ENCODE measurements at regions of chr19 and their contacts with region 1.

Region 1: DNA sequence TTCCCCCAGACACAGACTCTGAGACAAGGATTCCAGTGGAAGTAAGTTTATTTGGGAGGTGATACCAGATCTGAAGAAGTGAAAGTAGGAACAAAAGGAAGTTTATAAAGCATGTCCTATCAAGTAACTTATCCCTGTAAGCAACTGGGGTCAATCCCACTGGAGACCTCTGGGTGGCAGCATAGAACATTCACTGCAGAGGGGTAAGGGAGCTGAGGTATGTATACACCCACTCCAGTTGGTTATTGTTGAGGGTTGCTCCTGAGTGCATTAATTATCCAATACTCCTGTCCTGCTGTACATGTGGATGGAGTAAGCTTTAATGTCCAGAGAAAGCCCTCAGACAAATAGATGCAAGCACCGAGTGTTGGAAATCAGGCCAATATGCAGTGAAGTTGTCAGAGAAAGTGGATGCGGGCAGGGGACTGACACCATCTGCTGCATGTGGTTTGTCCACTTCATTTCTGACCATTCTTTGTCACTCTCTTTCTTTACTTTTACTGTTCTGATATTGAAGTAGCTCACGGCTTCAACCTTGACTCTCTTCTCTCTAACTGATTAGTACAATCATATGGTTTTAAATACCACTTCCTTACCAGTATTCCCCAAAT is 46.7 kb downstream of the NOTCH3 start:
- DNase-seq: peak in 1 of 2 experiments; percentile 84
- H3K4me3 ChIP-seq: no peak overlapping the region
- H3K27ac ChIP-seq: no peak overlapping the region
- H3K4me1 ChIP-seq: no peaks in the 10 kb centered on the region; a peak in 1 of 7 replicates
- H3K27me3 ChIP-seq: no peaks in the 10 kb centered on the region
- CTCF ChIP-seq: peak; percentile 53 to 83 (median 63)
- EP300 ChIP-seq: no peak
- POLR2A ChIP-seq: no peak
- RAD21 ChIP-seq: peak; percentile 63 to 74

Region 2: GRCh38 chr19:15101479-15102082 is 52.5 kb before region 1 on chr19:
- CTCF ChIA-PET with region 1: interaction called, 120 read pairs
- POLR2A ChIA-PET with region 1: no interaction called
- DNase-seq: peak in 1 of 2 experiments; percentile 87
- H3K4me3 ChIP-seq: no peak overlapping the region
- H3K27ac ChIP-seq: no peak overlapping the region
- H3K4me1 ChIP-seq: no peaks in the 10 kb centered on the region
- H3K27me3 ChIP-seq: no peaks in the 10 kb centered on the region
- CTCF ChIP-seq: peak; percentile 56 to 87 (median 74)
- EP300 ChIP-seq: no peak
- POLR2A ChIP-seq: no peak
- RAD21 ChIP-seq: peak; percentile 67 to 68

Region 3: DNA sequence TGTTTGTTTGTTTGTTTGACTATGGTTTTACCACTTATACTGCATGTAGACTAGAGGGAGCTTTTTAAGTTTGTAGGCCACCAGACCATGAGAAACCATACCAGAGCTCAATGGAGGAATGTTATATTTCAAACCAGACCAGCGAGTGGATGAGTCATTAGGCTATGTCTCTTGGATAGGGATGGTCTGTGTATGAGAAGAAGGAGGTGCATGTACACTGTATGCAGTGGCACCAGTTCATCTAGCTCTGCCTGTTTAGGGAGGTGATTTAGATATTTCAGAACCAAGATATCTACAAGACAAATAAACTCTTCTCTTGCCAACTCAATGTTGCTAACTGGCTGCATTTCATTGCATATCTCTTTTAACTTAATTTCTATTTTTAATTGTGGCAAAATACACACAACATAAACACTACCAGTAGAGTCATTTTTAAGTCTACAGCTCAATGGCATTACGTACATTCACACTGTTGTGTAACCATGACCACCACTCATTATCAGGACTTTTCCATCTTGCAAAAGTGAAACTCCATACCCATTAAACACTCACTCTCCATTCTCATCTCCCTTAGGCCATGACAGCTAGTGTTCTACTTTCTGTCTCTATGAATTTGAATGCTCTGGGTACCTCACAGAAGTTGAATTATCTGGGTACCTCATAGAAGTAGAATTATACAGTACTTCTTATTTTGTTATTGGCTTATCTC is 17.7 kb before region 1 on chr19:
- CTCF ChIA-PET with region 1: interaction called, 17 read pairs
- POLR2A ChIA-PET with region 1: interaction called, 3 read pairs
- DNase-seq: no peak
- H3K4me3 ChIP-seq: no peak overlapping the region
- H3K27ac ChIP-seq: no peak overlapping the region
- H3K4me1 ChIP-seq: no peaks in the 10 kb centered on the region
- H3K27me3 ChIP-seq: no peaks in the 10 kb centered on the region; a peak in 2 of 7 replicates
- CTCF ChIP-seq: no peak
- EP300 ChIP-seq: no peak
- POLR2A ChIP-seq: no peak
- RAD21 ChIP-seq: no peak

Region 4: DNA sequence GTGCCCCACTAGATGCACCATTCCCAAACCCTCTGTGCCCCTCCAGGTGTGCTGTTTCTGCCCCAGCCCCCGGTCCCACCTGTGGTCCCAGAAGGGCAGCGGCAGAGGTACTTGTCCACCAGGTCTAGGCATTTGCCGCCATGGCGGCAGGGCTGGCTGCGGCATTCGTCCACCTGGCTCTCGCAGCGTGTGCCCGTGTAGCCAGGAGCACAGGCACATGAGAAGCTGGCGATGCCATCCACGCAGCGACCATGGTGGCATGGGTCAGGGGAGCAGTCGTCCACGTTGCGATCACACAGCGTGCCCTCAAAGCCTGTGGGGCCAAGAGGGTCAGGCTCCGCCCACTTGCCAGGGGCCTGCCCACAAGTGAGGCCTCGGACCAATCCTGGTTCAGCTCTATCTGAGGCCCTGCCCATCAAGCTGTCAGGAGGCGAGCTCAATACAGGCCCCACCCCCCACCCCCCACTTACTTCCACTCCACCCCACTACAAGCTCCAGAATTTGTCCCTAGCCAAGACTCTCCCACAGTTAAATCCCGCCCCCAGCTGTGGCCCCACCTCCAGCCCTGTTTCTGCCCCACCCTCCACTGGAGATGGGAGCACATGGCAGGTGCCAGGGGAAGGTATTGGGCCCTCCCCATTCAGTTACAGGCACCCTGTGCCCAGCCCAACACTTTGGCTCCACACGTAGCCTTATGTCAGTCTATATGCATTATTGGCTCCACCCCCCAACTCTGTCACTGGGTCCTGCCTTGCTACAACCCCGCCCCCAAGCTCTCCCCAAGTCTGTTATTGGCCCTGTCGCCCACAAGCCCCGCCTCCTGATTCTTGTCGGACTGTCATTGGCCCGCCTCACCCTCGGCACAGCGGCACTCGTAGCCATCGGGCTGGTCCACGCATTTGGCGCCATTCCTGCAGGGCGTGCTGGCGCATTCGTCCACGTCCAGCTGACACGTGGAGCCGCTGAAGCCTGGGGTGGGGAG is 33.2 kb after region 1 on chr19:
- CTCF ChIA-PET with region 1: interaction called, 17 read pairs
- POLR2A ChIA-PET with region 1: no interaction called
- DNase-seq: peak in 1 of 2 experiments; percentile 67
- H3K4me3 ChIP-seq: no peak overlapping the region
- H3K27ac ChIP-seq: no peak overlapping the region
- H3K4me1 ChIP-seq: no peaks in the 10 kb centered on the region
- H3K27me3 ChIP-seq: no peaks in the 10 kb centered on the region
- CTCF ChIP-seq: no peak
- EP300 ChIP-seq: no peak
- POLR2A ChIP-seq: no peak
- RAD21 ChIP-seq: no peak

Region 5: GRCh38 chr19:15251749-15252397 is 97.8 kb after region 1 on chr19:
- CTCF ChIA-PET with region 1: interaction called, 12 read pairs
- POLR2A ChIA-PET with region 1: interaction called, 3 read pairs
- DNase-seq: peak; percentile 46 to 84
- H3K4me3 ChIP-seq: no peak overlapping the region; a peak in 2 of 8 replicates
- H3K27ac ChIP-seq: no peak overlapping the region
- H3K4me1 ChIP-seq: peaks cover 0 to 15% (median 4%) of the 10 kb centered on the region in 4 experiments; a peak in 5 of 7 replicates
- H3K27me3 ChIP-seq: no peaks in the 10 kb centered on the region
- CTCF ChIP-seq: peak; percentile 67 to 71 (median 71)
- EP300 ChIP-seq: no peak
- POLR2A ChIP-seq: no peak
- RAD21 ChIP-seq: peak; percentile 38 to 52